Activated B cell treated with CpG ODN at 0.5 μM for 24 hours (primary cell): ENCODE measurements at regions of chr18 and their contacts with region 1.

Region 1: GRCh38 chr18:3593904-3594661 is 144.1 kb downstream of the TGIF1 start:
- DNase-seq: peak; percentile 76
- ATAC-seq: peak; percentile 78
- H3K4me3 Mint-ChIP-seq: peak overlapping the region; percentile 90
- H3K27ac Mint-ChIP-seq: peak overlapping the region; percentile 94
- H3K4me1 Mint-ChIP-seq: peaks cover 65% of the 10 kb centered on the region
- H3K27me3 Mint-ChIP-seq: no peaks in the 10 kb centered on the region
- CTCF ChIP-seq: no peak

Region 2: GRCh38 chr18:2776601-2777000 is 817.5 kb before region 1 on chr18:
- CTCF ChIA-PET with region 1: no interaction called
- POLR2A ChIA-PET with region 1: no interaction called
- intact Hi-C with region 1: no loop called
- DNase-seq: no peak
- ATAC-seq: no peak
- H3K4me3 Mint-ChIP-seq: no peak overlapping the region
- H3K27ac Mint-ChIP-seq: no peak overlapping the region
- H3K4me1 Mint-ChIP-seq: no peaks in the 10 kb centered on the region
- H3K27me3 Mint-ChIP-seq: no peaks in the 10 kb centered on the region
- CTCF ChIP-seq: no peak

Region 3: DNA sequence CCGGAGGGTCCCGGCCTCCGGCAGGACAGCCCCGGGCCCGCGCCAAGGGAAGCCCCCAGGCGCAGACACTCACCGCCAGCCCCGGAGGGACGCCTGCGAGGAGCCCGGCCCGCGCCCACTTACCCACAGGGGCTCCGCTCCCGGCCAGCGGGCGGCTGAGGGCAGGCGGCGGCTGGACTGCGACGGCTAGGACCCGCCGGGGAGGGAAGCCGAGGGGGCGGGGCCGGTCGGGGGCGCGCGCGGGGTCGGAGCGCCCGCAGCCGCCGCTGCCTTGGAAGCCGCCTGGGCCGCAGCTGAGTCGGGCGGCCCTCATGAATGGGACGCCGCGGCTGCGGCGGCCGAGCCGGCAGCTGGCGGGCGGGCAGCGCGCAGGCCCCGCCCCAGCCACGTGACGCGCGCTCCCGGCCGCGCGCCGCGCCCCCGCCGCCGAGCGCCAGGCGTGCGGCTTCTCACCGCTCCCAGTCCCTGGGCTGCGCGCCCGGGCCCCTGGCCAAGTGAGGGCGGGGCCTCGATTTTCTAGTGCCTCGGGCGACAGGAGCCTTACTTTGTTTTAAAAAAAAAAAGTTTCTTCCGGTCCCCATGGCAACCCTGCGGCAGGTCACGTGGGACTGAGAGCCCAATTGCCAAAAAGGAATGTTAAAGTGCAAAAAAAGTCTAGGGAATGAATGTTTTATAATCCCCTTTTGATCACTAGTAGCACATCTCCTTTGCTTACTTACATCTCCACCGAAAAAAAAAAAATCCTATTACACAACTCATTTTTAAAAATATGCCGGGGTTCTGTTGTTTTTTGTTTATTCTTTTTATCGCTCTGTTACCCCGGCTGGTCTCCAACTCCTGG is 580.9 kb before region 1 on chr18 and contains the start of gene LPIN2:
- CTCF ChIA-PET with region 1: no interaction called
- POLR2A ChIA-PET with region 1: no interaction called
- intact Hi-C with region 1: loop called (anchors 5 kb)
- DNase-seq: peak; percentile 91
- ATAC-seq: peak; percentile 86
- H3K4me3 Mint-ChIP-seq: peak within 1 kb of the TSS; percentile 95
- H3K27ac Mint-ChIP-seq: peak within 1 kb of the TSS; percentile 88
- H3K4me1 Mint-ChIP-seq: peaks cover 59% of the 10 kb centered on the region
- H3K27me3 Mint-ChIP-seq: no peaks in the 10 kb centered on the region
- CTCF ChIP-seq: no peak
- total RNA-seq, gene LPIN2: 21.8 and 24.4 TPM in 2 replicates

Region 4: DNA sequence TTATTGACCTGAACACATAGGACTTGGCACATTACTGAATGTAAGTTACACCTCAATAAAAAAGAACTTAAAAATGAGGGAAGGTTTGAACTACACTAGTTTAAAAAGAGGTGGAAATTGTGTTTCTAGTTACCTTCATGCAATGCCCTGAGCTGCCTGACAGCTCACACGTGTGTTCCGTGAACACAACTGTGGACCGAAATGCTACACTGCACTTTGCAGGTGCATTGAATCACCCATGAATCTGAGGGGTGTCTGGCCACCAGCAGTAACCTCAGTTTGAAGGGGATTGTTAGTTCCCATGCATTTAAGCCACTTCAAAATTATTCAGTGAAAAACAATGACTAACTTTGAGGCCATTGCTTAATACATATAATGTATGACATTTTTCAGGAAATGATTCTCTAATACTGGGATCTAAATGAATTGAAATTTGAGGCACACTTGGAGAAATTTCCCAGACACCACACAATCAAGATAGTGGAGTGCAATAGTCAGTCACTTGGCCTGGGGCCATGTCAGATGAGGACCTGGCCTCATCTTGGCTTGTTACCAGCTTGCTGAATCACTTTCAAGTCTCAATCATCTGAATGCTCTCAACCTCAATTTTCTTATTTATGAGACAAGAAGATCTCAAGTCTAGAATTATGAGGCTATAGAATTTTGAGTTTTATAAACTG is 272.8 kb before region 1 on chr18:
- CTCF ChIA-PET with region 1: interaction called, 8 read pairs
- POLR2A ChIA-PET with region 1: interaction called, 5 read pairs
- intact Hi-C with region 1: loop called (anchors 1 kb)
- DNase-seq: no peak
- ATAC-seq: no peak
- H3K4me3 Mint-ChIP-seq: no peak overlapping the region
- H3K27ac Mint-ChIP-seq: no peak overlapping the region
- H3K4me1 Mint-ChIP-seq: peaks cover 24% of the 10 kb centered on the region
- H3K27me3 Mint-ChIP-seq: no peaks in the 10 kb centered on the region
- CTCF ChIP-seq: no peak

Region 5: DNA sequence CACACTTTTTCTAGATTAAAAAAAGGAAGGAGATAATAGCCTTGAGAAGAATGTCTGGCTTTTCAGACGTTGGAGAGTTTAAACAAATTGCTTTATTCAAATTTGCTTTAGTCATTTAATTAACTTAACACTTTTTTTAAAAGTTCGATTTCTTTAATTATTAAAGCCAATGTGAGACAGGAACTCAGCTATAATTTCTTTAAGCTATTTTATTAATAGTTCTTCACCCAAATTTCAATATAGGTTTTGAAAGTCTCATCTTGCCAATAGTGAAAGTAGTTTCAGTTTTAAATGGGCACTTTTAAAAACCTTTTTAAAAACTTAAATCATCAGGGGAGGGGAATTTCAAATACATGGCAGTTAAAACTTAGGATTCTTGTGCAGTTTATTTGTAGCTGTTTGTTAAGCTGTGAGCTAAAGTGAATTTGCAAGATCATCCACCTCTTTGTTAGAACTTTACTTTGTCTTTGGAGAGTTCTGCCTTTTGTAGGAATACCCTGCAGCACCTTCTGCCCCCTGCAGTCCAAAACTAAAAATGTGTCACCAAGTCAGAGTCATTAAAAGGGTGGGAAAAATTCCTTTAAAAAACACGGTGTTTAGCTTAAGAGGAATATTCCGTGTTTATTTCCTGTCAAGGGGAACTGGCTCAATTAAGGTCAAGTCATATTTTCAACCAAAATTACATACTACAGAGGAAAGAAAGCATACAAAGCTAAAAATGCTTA is 139.6 kb before region 1 on chr18:
- CTCF ChIA-PET with region 1: interaction called, 81 read pairs
- POLR2A ChIA-PET with region 1: interaction called, 432 read pairs
- intact Hi-C with region 1: loop called (anchors 1 kb)
- DNase-seq: no peak
- ATAC-seq: no peak
- H3K4me3 Mint-ChIP-seq: peak overlapping the region; percentile 93
- H3K27ac Mint-ChIP-seq: peak overlapping the region; percentile 95
- H3K4me1 Mint-ChIP-seq: peaks cover 57% of the 10 kb centered on the region
- H3K27me3 Mint-ChIP-seq: no peaks in the 10 kb centered on the region
- CTCF ChIP-seq: no peak

Region 6: DNA sequence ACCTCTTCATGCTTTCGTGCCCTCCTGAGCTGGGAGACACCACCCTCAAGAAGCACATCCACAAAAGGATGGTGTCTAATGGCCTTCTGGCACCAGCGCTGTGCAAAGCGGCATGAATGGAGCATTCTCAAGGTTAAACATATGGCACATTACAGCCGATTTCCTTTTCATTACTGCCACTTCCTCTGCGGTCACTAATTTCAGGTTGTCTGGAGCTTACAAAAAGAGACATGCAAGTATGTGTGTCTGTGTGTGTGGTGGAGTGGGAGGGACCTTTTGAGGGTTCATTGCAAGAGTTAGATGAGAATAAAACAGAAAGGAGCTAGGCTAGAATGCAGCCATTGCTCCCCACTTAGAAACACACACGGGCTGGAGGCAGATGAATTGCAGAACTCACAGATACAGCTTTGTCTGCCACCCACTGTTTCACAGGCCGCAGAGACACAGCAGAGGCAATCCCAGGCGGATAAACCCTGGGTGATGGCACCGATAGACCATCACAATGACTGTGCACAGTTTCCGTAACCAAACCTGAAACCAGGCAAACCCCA is 68.1 kb before region 1 on chr18:
- CTCF ChIA-PET with region 1: interaction called, 10 read pairs
- POLR2A ChIA-PET with region 1: interaction called, 25 read pairs
- intact Hi-C with region 1: loop called (anchors 2 kb)
- DNase-seq: no peak
- ATAC-seq: peak; percentile 78
- H3K4me3 Mint-ChIP-seq: peak overlapping the region; percentile 62
- H3K27ac Mint-ChIP-seq: peak overlapping the region; percentile 20
- H3K4me1 Mint-ChIP-seq: peaks cover 18% of the 10 kb centered on the region
- H3K27me3 Mint-ChIP-seq: no peaks in the 10 kb centered on the region
- CTCF ChIP-seq: no peak

Region 7: DNA sequence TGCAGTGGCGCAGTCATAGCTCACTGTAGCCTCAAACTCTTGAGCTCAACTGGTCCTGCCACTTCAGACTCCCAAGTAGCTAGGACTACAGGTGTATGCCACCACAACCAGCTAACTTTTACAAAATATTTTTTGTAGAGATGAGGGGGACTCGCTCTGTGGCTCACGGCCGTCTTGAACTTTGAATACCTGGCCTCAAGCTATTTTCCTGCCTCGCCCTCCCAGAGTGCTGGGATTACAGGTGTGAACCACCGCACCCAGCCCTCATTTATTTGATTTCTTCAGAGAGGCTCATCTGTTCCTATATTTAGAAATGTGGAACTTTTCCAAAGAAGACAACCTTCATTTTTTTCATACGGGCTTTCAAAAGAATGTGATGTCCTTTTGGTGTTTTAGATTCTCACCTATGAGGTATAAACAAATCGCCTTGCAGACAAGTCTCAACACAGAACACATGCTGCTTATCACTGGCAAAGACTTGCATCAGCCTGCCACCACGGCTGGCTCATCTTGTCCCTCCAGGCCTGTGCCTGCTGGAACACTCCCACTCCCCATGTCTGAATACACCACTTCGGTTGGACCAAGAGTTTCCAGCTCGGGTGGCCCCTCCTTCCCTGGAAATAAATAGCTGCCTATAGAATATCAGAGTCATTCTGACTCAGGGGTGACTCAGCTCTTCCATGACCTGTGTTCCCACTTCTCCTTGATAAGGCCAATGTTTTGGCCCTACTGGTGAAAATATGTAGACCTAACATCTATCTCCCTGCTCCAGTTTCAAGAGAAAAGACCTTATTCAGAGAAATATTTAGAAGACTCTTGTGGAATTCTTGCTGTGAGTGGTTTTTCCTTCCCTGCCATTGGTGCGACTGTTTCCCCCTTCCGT is 58.5 kb after region 1 on chr18:
- CTCF ChIA-PET with region 1: no interaction called
- POLR2A ChIA-PET with region 1: no interaction called
- intact Hi-C with region 1: no loop called
- DNase-seq: no peak
- ATAC-seq: no peak
- H3K4me3 Mint-ChIP-seq: no peak overlapping the region
- H3K27ac Mint-ChIP-seq: no peak overlapping the region
- H3K4me1 Mint-ChIP-seq: peaks cover 5% of the 10 kb centered on the region
- H3K27me3 Mint-ChIP-seq: peaks cover 9% of the 10 kb centered on the region
- CTCF ChIP-seq: no peak

Region 8: GRCh38 chr18:3716116-3716660 is 122.1 kb after region 1 on chr18:
- CTCF ChIA-PET with region 1: no interaction called
- POLR2A ChIA-PET with region 1: interaction called, 13 read pairs
- intact Hi-C with region 1: no loop called
- DNase-seq: no peak
- ATAC-seq: no peak
- H3K4me3 Mint-ChIP-seq: no peak overlapping the region
- H3K27ac Mint-ChIP-seq: no peak overlapping the region
- H3K4me1 Mint-ChIP-seq: no peaks in the 10 kb centered on the region
- H3K27me3 Mint-ChIP-seq: peaks cover 7% of the 10 kb centered on the region
- CTCF ChIP-seq: no peak